Dorsolateral prefrontal cortex (tissue), 120 donors: ENCODE measurements at regions of chr1 and their contacts with region 1.

Region 1: DNA sequence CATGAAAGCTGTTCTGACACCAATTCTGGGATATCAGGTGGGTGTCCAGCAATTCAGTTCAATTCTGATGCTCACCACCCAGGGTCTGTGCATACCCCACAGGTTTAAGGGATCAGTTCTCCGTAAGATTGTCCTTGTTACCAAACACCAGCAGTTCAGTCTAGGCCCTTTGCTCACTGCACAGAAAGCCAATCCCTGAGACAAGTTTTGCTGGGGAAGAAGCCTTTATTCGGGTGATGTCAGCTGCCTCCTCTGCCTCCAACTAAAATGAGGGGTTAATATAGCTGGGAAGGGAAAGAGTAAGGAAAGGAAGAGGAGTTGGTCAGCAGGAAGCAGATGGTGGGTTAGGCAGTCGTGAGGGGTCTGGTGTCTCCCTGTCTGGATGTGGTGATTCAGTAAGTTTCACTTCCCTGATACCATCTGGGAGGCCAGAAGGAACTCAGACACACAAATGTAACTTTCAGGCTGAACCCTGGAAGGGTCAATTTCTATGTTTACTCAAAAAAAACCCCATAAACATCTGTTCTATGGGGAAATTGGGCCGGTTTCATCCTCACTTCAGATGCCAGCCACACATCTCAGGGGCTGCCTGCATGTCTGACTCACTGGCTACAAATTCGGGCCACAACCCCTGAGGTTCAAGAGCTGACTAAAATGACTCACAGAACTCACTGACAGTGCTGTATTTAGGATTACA is 83.3 kb upstream of the PGBD5 start:
- DNase-seq: peak in 1 of 10 donors; percentile 52
- H3K4me3 ChIP-seq: no peak overlapping the region
- H3K27ac ChIP-seq: peak overlapping the region in 12 of 59 donors; percentile 4 to 71 (median 33)
- H3K27me3 ChIP-seq: no peaks in the 10 kb centered on the region
- CTCF ChIP-seq: no peak

Region 2: GRCh38 chr1:230375780-230376179 is 133.6 kb before region 1 on chr1:
- intact Hi-C with region 1: loop called in 1 of 2 experiments (anchors 10 kb)
- DNase-seq: peak in 7 of 10 donors; percentile 57 to 78 (median 65)
- H3K4me3 ChIP-seq: peak overlapping the region in 12 of 59 donors; percentile 4 to 42 (median 13)
- H3K27ac ChIP-seq: peak overlapping the region; percentile 51 to 97 (median 88)
- H3K27me3 ChIP-seq: no peaks in the 10 kb centered on the region
- CTCF ChIP-seq: no peak

Region 3: DNA sequence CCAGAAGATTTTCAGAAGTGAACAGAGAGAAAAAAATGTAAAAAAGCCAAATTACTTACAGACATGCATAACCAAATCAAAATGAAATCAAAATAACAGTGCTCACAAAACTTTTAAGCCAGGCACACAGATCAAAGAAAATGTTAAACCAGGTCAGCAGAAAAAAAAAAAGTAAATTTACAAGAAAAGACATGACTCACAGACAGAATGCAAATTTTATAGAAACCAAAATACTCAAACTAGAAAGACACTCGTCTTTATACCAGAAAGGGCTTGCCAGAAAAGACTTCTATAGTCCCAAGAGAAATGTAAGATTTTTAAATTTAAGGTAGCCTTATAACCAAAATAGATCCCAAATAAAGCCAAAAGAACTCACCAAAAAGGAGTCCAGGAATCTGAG is 46.4 kb after region 1 on chr1:
- intact Hi-C with region 1: no loop called
- DNase-seq: no peak
- H3K4me3 ChIP-seq: no peak overlapping the region
- H3K27ac ChIP-seq: no peak overlapping the region
- H3K27me3 ChIP-seq: peaks cover 0 to 2% (median 0%) of the 10 kb centered on the region in 45 donors
- CTCF ChIP-seq: no peak